AG04449 (cell line): ENCODE measurements at regions of chr9 and their contacts with region 1.

Region 1: GRCh38 chr9:77456829-77457437 is 191.2 kb downstream of the GNA14 start:
- DNase-seq: no peak
- H3K4me3 ChIP-seq: no peak overlapping the region
- CTCF ChIP-seq: peak; percentile 79

Region 2: DNA sequence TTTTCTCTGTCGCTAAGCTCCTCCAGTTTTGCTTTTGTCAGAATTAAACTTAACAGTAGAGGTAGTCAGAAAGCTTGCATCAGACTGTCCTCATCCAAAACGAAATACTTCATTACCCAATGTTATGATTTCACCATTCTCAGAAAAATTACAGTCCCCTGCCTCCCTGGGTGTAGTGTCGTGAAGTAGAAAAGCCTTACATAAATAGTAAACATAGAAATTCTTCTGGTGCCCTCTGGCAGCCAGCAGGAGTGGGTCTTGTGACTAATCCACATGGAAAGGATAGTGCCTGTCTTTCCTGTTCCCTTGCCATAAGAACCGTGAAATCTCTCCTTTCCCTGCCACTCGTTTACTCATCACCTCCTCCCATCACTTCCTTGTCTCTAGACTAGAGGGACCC is 39.4 kb before region 1 on chr9:
- CTCF ChIA-PET with region 1: interaction called, 14 read pairs
- POLR2A ChIA-PET with region 1: no interaction called
- DNase-seq: no peak
- H3K4me3 ChIP-seq: no peak overlapping the region
- CTCF ChIP-seq: no peak

Region 3: GRCh38 chr9:77469515-77470231 is 12.7 kb after region 1 on chr9:
- CTCF ChIA-PET with region 1: interaction called, 189 read pairs
- POLR2A ChIA-PET with region 1: no interaction called
- DNase-seq: peak; percentile 52
- H3K4me3 ChIP-seq: no peak overlapping the region
- CTCF ChIP-seq: no peak

Region 4: DNA sequence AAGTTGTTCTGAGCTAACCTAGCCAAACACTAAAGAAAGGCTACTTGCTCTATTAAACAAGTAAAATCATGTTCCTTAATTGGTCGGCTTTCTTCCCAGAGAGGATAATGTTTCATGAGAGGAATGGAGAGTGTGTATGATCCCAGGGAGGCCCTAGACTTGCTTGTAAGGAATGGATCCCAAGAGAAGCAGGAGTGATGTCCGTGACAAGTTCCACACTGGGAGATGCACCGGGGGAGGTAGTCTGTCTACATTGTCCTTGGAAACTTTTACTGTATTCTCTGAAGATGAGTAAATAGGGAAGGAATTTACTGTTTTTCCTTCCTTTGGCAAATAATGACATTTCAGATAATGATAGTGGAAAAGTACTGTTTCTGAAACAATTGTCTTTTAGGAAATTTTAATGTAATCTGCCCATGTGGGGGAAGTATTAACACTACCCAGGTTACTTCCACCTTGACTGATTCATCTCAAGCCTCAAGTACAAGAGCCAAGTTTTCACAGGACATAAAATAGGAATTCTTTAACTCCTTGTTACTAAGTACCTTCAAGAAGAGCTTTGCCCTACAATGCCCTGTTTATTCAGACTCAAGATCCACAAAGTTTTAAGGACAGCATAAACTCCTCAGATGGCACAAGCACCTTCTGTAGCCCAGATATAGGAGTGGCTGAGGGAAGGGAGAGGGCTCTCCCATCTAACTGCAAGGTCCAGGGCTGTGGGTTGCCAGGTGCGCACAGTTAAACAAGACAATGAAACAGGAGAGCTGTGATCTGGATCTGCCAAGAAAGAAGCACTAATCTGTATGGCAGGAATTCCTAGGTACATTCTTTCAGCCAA is 39.1 kb after region 1 on chr9:
- CTCF ChIA-PET with region 1: interaction called, 22 read pairs
- POLR2A ChIA-PET with region 1: no interaction called
- DNase-seq: peak; percentile 75
- H3K4me3 ChIP-seq: no peak overlapping the region
- CTCF ChIP-seq: no peak

Region 5: GRCh38 chr9:77751341-77752091 is 294.6 kb after region 1 on chr9:
- CTCF ChIA-PET with region 1: interaction called, 59 read pairs
- POLR2A ChIA-PET with region 1: no interaction called
- DNase-seq: peak; percentile 56
- H3K4me3 ChIP-seq: no peak overlapping the region
- CTCF ChIP-seq: peak; percentile 47